Left cardiac atrium (tissue), 4 donors: ENCODE measurements at regions of chr11 and their contacts with region 1.

Region 1: GRCh38 chr11:59753650-59754493 is 1.3 kb upstream of the STX3 start:
- DNase-seq: peak; percentile 90
- ATAC-seq: peak; percentile 69 to 70

Region 2: GRCh38 chr11:59480359-59480758 is 273.5 kb before region 1 on chr11:
- intact Hi-C with region 1: no loop called
- DNase-seq: no peak
- ATAC-seq: no peak

Region 3: DNA sequence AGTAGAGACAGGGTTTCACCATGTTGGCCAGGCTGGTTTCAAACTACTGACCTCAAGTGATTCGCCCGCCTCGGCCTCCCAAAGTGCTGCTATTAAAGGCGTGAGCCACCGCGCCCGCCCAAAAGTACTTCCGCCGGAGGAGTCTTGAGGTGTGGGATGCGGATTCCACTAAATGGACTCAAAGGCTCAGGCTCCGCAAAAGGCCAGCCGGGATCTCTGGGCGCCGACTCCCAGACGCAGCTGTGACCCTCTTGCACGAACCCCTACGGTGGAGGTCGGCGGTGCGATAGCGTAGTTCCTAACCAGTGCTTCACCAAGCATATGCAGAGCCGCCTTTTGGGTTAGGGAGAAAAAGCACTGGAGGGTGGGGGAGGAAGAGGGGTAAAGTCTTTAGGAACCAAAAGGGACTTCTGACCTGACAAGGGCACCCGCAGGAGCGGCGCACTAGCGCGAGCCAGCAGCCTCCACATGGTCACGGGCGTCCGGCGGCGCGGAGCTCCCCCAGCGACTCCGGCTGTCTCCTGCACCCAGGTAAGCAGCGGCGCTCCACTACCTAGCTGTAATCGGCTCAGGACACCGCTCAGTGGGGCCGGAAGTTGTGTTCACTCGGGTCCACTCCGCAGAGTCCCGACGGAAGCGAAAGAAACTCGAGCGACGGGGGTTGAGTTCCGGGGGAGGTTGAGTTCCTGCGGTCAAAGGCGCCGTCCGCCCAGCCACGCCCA is 56.5 kb after region 1 on chr11 and contains the start of gene MRPL16:
- intact Hi-C with region 1: loop called in 1 of 2 experiments (anchors 2 kb)
- DNase-seq: peak; percentile 89
- ATAC-seq: peak; percentile 98 to 99
- total RNA-seq, gene MRPL16: 61.2 to 70.4 TPM